ENCODE measurements at regions of chr3 and their contacts with region 1.

Region 1: DNA sequence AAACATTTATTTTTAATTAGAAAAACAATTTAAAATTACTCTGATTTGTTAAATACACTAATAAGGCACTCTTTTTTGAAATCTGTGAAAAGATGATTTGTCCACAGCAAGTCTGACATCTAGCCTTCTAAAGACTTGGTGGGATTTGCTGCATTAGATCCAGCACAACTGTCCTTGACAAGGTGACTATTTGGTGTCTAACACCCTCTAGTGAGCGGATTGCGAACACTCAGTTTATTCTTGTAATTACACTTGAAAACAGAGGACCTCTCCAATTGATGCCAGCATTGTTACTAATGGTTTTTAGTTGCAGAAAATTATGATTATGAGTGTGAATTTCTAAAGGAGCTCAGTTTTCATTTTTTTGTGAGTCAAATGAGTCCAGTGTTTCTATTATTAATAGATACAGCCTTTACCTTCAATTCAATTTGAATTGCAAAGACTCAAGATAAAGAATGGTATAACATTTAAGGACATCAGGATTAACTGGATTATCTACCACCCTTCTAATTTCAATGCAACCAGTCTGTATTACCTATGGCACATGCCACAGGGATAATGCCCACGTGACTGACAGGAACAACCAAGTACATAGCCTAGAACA is 29.7 kb upstream of the STRIT1 start:
- DNase-seq: peak in 1 of 2 donors; percentile 48
- ATAC-seq: no peak
- H3K4me3 ChIP-seq: no peak overlapping the region
- H3K4me3 Mint-ChIP-seq: no peak overlapping the region
- H3K27ac ChIP-seq: no peak overlapping the region
- H3K27ac Mint-ChIP-seq: no peak overlapping the region
- H3K4me1 ChIP-seq: no peaks in the 10 kb centered on the region
- H3K4me1 Mint-ChIP-seq: no peaks in the 10 kb centered on the region
- H3K27me3 ChIP-seq: no peaks in the 10 kb centered on the region
- H3K27me3 Mint-ChIP-seq: no peaks in the 10 kb centered on the region
- CTCF ChIP-seq: peak; percentile 13

Region 2: GRCh38 chr3:154334973-154335420 is 988.2 kb before region 1 on chr3:
- intact Hi-C with region 1: loop called (anchors 10 kb)
- DNase-seq: peak in 1 of 2 donors; percentile 62
- ATAC-seq: peak in 1 of 3 donors; percentile 55
- H3K4me3 ChIP-seq: no peak overlapping the region
- H3K4me3 Mint-ChIP-seq: no peak overlapping the region
- H3K27ac ChIP-seq: no peak overlapping the region
- H3K27ac Mint-ChIP-seq: no peak overlapping the region
- H3K4me1 ChIP-seq: no peaks in the 10 kb centered on the region
- H3K4me1 Mint-ChIP-seq: no peaks in the 10 kb centered on the region
- H3K27me3 ChIP-seq: peaks cover 4% of the 10 kb centered on the region
- H3K27me3 Mint-ChIP-seq: peaks cover 16 to 22% of the 10 kb centered on the region in 2 donors
- CTCF ChIP-seq: peak; percentile 72

Measured in natural killer cell (primary cell).